ENCODE measurements at regions of chr5 and their contacts with region 1.

Region 1: DNA sequence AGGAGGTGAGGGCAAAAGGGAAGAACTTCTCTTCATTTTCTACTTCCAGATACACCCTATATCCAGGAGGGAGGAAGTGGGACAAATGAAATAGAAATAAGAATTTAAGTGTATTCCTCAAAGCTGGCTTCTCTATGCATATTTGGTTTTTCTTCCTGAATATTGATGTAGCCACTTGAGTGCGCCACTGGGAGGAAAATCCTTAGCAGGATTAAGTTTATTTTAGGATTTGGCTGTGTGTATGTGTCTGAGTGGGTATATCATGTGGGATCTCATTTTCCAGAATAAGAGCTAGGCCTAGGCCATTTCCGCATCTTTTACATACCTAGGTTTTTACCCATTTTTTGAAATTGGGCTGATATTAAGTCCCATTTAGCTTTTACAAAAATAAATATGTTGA is 42.5 kb downstream of the MAP1B start:
- DNase-seq: no peak
- H3K4me3 ChIP-seq: no peak overlapping the region
- H3K27ac ChIP-seq: no peak overlapping the region
- H3K4me1 ChIP-seq: no peaks in the 10 kb centered on the region
- H3K27me3 ChIP-seq: no peaks in the 10 kb centered on the region
- CTCF ChIP-seq: no peak
- POLR2A ChIP-seq: no peak

Region 2: GRCh38 chr5:71982717-71983395 is 166.9 kb before region 1 on chr5:
- intact Hi-C with region 1: no loop called
- DNase-seq: no peak
- H3K4me3 ChIP-seq: no peak overlapping the region
- H3K27ac ChIP-seq: no peak overlapping the region
- H3K4me1 ChIP-seq: no peaks in the 10 kb centered on the region
- H3K27me3 ChIP-seq: no peaks in the 10 kb centered on the region
- CTCF ChIP-seq: no peak
- POLR2A ChIP-seq: no peak

Region 3: DNA sequence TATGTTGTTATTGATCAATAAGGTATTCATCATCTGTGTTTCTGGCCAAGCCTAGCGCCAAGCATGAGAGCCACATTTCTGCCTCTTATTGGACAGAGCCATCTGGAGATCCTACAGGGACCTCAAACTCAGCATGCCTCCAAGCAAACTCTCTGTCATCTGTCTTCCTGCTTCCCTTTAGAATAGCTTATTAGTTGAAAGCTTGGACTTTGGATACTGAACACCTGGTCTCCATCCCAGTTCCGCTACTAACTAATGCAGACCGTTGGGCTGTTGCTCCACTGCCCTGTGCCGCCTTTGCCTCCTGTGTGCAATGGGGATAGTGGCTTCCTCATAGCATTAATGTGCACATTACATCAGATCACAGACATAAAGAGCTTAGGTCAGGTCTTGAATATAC is 23.0 kb after region 1 on chr5:
- intact Hi-C with region 1: loop called (anchors 1 kb)
- DNase-seq: no peak
- H3K4me3 ChIP-seq: no peak overlapping the region
- H3K27ac ChIP-seq: no peak overlapping the region
- H3K4me1 ChIP-seq: peaks cover 0 to 1% of the 10 kb centered on the region in 2 donors
- H3K27me3 ChIP-seq: no peaks in the 10 kb centered on the region
- CTCF ChIP-seq: no peak
- POLR2A ChIP-seq: no peak

Region 4: DNA sequence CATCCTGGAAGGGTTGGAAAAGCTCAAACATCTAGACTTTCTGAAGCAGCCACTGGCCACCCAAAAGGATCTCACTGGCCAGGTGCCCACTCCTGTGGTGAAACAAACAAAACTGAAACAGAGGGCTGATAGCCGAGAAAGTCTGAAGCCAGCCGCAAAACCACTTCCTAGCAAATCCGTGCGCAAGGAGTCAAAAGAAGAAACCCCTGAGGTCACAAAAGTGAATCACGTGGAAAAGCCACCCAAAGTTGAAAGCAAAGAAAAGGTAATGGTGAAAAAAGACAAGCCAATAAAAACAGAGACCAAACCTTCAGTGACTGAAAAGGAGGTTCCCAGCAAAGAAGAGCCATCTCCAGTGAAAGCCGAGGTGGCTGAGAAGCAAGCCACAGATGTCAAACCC is 45.1 kb after region 1 on chr5:
- intact Hi-C with region 1: no loop called
- DNase-seq: no peak
- H3K4me3 ChIP-seq: no peak overlapping the region
- H3K27ac ChIP-seq: no peak overlapping the region
- H3K4me1 ChIP-seq: no peaks in the 10 kb centered on the region
- H3K27me3 ChIP-seq: no peaks in the 10 kb centered on the region
- CTCF ChIP-seq: no peak
- POLR2A ChIP-seq: no peak